ENCODE measurements at regions of chr1 and their contacts with region 1.

Region 1: DNA sequence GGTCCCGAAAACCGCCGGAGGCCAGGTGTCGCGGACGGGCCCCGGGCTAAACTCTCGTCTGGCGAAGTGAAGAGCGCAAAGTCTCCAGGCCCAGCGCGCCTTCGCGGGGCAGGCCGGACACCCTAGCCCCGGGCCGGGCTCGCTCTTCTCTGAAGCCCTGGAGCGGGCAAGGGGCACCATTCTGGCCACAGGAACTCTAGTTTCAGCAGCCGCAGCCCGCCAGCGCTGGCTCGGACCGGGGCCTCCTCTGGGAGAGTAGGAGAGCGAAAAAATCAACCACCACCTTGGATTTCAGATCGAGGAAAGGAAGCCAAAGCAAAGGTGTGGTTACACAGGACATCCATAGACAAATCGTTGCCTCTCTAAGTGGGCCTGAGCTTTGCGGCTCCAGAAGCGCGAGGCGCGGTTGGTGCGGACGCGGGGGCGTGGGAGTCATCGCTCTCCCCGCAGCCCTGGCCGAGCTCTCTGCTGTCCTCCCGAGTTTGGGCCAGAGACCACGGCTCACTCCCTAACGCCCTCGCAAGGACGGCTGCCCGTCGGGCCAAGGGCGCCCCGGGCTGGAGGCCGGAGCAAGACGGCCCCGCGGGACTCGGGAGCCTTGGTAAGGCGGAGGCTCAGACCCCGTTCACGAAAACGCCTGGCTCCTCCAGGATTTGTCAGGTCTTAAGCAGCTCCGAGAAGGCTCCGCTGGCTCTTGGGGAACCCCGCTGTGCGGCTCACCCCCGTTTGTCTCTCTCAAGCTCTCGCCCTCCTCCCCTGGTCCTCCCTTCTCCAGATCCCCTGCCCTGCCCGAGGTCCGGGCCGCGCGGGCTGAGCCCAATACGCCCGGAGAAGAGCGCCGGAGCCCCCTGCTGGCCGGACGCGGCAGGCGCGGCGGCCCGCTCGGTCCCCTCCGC is 132.9 kb upstream of the DPYD start:
- DNase-seq: peak; percentile 87
- ATAC-seq: peak; percentile 89
- H3K4me3 ChIP-seq: peak overlapping the region; percentile 74
- H3K27ac ChIP-seq: peak overlapping the region; percentile 50
- H3K4me1 ChIP-seq: peaks cover 40% of the 10 kb centered on the region
- H3K27me3 ChIP-seq: no peaks in the 10 kb centered on the region
- CTCF ChIP-seq: peak; percentile 89

Region 2: GRCh38 chr1:96966536-96967138 is 1087.1 kb before region 1 on chr1:
- CTCF ChIA-PET with region 1: no interaction called
- POLR2A ChIA-PET with region 1: no interaction called
- intact Hi-C with region 1: loop called (anchors 10 kb)
- DNase-seq: peak; percentile 86
- ATAC-seq: peak; percentile 88
- H3K4me3 ChIP-seq: peak overlapping the region; percentile 68
- H3K27ac ChIP-seq: no peak overlapping the region
- H3K4me1 ChIP-seq: peaks cover 14% of the 10 kb centered on the region
- H3K27me3 ChIP-seq: no peaks in the 10 kb centered on the region
- CTCF ChIP-seq: peak; percentile 83

Region 3: DNA sequence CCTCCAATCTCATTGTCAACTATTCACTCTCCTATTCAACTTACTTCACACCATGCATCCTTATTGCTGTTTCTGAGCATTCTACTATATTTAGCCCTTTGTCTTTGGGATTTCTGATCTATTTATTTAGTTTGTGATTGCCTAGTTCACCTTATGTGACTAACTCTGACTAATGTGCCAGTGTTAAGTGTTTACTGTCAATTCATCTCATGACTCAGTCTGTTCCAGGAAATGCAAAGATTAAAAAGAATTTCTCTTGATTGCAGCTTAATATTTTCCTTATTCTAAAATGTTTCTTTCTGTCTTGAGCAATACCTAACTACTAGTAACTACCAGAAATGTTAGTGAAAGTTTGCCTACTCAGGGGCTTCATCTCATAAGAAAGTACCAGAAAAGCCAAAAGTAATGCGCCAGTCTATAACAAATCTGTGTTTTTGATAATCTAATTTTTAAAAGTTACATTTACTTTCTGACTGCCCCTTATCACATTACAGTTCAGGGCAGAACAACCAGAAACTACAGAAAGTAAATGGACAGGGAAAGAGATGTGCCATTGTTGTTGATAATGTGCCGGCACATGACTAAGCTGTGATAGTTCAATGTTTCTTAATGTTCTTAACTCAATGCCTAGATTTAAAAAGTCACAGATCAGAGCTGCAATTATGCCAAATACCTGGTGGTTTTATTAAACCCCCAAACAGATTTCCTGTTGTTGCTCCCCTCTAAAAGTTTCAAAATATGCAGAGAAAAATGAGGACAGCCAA is 775.6 kb before region 1 on chr1:
- CTCF ChIA-PET with region 1: no interaction called
- POLR2A ChIA-PET with region 1: no interaction called
- intact Hi-C with region 1: loop called (anchors 10 kb)
- DNase-seq: peak; percentile 87
- ATAC-seq: peak; percentile 93
- H3K4me3 ChIP-seq: peak overlapping the region; percentile 17
- H3K27ac ChIP-seq: peak overlapping the region; percentile 89
- H3K4me1 ChIP-seq: peaks cover 22% of the 10 kb centered on the region
- H3K27me3 ChIP-seq: no peaks in the 10 kb centered on the region
- CTCF ChIP-seq: no peak

Region 4: DNA sequence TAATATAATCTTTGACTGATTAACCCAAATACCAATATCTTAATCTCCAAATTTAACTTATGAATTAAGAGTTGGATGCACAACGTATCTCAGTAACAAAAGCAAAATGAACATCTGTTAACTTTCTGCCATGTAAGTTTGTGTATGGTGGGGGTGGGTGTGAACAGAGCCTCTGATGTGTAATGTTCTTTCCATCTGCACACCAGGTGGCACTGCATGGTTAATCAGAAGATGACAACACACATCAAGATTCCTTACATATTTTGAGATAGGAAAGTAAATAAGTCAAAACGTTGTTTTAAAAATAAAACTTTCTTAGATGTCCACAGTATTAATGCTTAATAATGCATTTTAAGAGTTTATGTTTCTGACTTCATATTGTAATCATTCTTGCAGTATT is 384.8 kb before region 1 on chr1:
- CTCF ChIA-PET with region 1: no interaction called
- POLR2A ChIA-PET with region 1: no interaction called
- intact Hi-C with region 1: loop called (anchors 1 kb)
- DNase-seq: peak; percentile 64
- ATAC-seq: peak; percentile 91
- H3K4me3 ChIP-seq: no peak overlapping the region
- H3K27ac ChIP-seq: no peak overlapping the region
- H3K4me1 ChIP-seq: peaks cover 7% of the 10 kb centered on the region; the same call in 1 of the 2 replicates
- H3K27me3 ChIP-seq: no peaks in the 10 kb centered on the region
- CTCF ChIP-seq: peak; percentile 76

Region 5: GRCh38 chr1:97920832-97921571 is 132.7 kb before region 1 on chr1 and contains the start of gene DPYD:
- CTCF ChIA-PET with region 1: interaction called, 3 read pairs
- POLR2A ChIA-PET with region 1: no interaction called
- intact Hi-C with region 1: loop called (anchors 2 kb)
- DNase-seq: peak; percentile 88
- ATAC-seq: peak; percentile 90
- H3K4me3 ChIP-seq: peak within 1 kb of the TSS; percentile 84
- H3K27ac ChIP-seq: peak within 1 kb of the TSS; percentile 69
- H3K4me1 ChIP-seq: peaks cover 24% of the 10 kb centered on the region
- H3K27me3 ChIP-seq: no peaks in the 10 kb centered on the region
- CTCF ChIP-seq: no peak
- total RNA-seq, gene DPYD: 11.7 and 12.8 TPM in 2 replicates

Region 6: DNA sequence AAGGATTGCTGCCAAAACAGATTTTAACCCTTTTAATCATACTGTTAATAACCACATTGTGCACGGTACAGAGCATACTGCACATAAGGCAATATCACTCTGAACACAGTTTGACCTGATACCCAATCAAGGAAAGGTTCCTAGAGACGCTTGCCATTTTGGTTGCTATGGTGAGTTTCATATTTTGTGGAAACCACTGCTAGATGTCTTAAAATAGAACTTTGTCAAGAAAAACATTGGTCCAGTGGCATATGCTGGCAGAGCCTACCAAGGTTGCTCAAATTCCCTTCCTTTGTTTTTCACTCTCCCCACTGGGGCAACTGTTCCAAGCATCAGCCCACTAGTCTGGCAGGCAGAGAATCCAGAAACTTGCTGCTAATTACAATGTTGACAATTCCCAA is 18.1 kb before region 1 on chr1:
- CTCF ChIA-PET with region 1: no interaction called
- POLR2A ChIA-PET with region 1: no interaction called
- intact Hi-C with region 1: no loop called
- DNase-seq: no peak
- ATAC-seq: no peak
- H3K4me3 ChIP-seq: no peak overlapping the region
- H3K27ac ChIP-seq: no peak overlapping the region
- H3K4me1 ChIP-seq: peaks cover 30% of the 10 kb centered on the region
- H3K27me3 ChIP-seq: no peaks in the 10 kb centered on the region
- CTCF ChIP-seq: no peak

Region 7: DNA sequence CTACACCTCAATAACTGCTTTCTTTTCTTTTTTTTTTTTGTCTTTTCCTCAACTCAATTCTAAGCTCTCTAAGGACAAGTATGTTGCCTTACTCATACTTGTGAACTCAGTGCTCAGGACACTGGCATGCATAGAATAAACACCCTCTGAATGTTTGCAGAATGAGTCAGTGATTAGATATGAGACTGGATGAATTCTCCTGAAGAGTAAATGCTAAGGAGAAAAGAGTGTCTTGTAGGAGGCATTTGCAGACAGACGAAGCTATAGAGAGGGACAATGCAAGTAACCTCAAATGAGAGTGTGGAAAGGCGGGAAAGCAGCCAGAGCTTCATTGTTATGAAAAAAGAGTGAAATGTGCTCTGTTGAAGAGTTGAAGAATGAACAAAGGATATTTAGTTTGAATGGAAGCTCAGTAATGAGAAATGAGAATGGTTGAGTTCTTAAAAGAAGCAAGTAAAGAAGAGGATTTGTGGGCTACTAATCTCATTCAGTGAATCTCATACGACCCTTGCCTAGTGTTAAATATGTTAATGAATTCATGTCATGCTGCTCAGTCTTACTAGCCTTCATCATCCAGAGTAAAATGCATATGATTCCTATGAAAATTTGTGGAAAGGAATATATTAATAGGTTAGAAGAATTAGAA is 33.2 kb after region 1 on chr1:
- CTCF ChIA-PET with region 1: no interaction called
- POLR2A ChIA-PET with region 1: no interaction called
- intact Hi-C with region 1: loop called (anchors 1 kb)
- DNase-seq: peak; percentile 97
- ATAC-seq: peak; percentile 83
- H3K4me3 ChIP-seq: no peak overlapping the region
- H3K27ac ChIP-seq: peak overlapping the region; percentile 74
- H3K4me1 ChIP-seq: peaks cover 66% of the 10 kb centered on the region
- H3K27me3 ChIP-seq: no peaks in the 10 kb centered on the region
- CTCF ChIP-seq: no peak

Region 8: GRCh38 chr1:98323906-98324358 is 270.2 kb after region 1 on chr1:
- CTCF ChIA-PET with region 1: no interaction called
- POLR2A ChIA-PET with region 1: no interaction called
- intact Hi-C with region 1: loop called (anchors 2 kb)
- DNase-seq: peak; percentile 98
- ATAC-seq: peak; percentile 68
- H3K4me3 ChIP-seq: peak overlapping the region; percentile 32
- H3K27ac ChIP-seq: peak overlapping the region; percentile 96
- H3K4me1 ChIP-seq: peaks cover 80% of the 10 kb centered on the region
- H3K27me3 ChIP-seq: no peaks in the 10 kb centered on the region
- CTCF ChIP-seq: no peak